ENCODE measurements at regions of chr22 and their contacts with region 1.

Region 1: GRCh38 chr22:46914916-46915894 is 152.8 kb downstream of the TBC1D22A start:
- DNase-seq: no peak
- ATAC-seq: no peak
- H3K4me3 ChIP-seq: no peak overlapping the region
- H3K27ac ChIP-seq: no peak overlapping the region
- H3K4me1 ChIP-seq: no peaks in the 10 kb centered on the region
- H3K27me3 ChIP-seq: no peaks in the 10 kb centered on the region
- CTCF ChIP-seq: no peak

Region 2: GRCh38 chr22:46421272-46421671 is 493.9 kb before region 1 on chr22:
- intact Hi-C with region 1: no loop called
- DNase-seq: no peak
- ATAC-seq: no peak
- H3K4me3 ChIP-seq: no peak overlapping the region
- H3K27ac ChIP-seq: no peak overlapping the region
- H3K4me1 ChIP-seq: peaks cover 10 to 30% (median 17%) of the 10 kb centered on the region in 9 donors
- H3K27me3 ChIP-seq: peaks cover 0 to 5% (median 0%) of the 10 kb centered on the region in 7 donors
- CTCF ChIP-seq: no peak

Region 3: GRCh38 chr22:48511211-48511610 is 1596.0 kb after region 1 on chr22:
- intact Hi-C with region 1: loop called in 1 of 10 experiments (anchors 5 kb)
- DNase-seq: no peak
- ATAC-seq: no peak
- H3K4me3 ChIP-seq: no peak overlapping the region
- H3K27ac ChIP-seq: no peak overlapping the region
- H3K4me1 ChIP-seq: no peaks in the 10 kb centered on the region
- H3K27me3 ChIP-seq: peaks cover 0 to 52% (median 0%) of the 10 kb centered on the region in 7 donors
- CTCF ChIP-seq: no peak